OCI-LY7 (cell line): ENCODE measurements at regions of chr19 and their contacts with region 1.

Region 1: GRCh38 chr19:3304871-3305423 is 61.4 kb upstream of the NFIC start:
- DNase-seq: peak; percentile 74
- H3K4me3 ChIP-seq: no peak overlapping the region
- H3K27ac ChIP-seq: no peak overlapping the region
- H3K4me1 ChIP-seq: no peaks in the 10 kb centered on the region
- CTCF ChIP-seq: peak; percentile 86

Region 2: GRCh38 chr19:3434712-3435553 is 130.0 kb after region 1 on chr19:
- CTCF ChIA-PET with region 1: no interaction called
- POLR2A ChIA-PET with region 1: no interaction called
- intact Hi-C with region 1: loop called (anchors 5 kb)
- DNase-seq: peak; percentile 99
- H3K4me3 ChIP-seq: peak overlapping the region; percentile 86
- H3K27ac ChIP-seq: peak overlapping the region; percentile 54
- H3K4me1 ChIP-seq: peaks cover 6% of the 10 kb centered on the region
- CTCF ChIP-seq: no peak